H1 (cell line): ENCODE measurements at regions of chr17 and their contacts with region 1.

Region 1: DNA sequence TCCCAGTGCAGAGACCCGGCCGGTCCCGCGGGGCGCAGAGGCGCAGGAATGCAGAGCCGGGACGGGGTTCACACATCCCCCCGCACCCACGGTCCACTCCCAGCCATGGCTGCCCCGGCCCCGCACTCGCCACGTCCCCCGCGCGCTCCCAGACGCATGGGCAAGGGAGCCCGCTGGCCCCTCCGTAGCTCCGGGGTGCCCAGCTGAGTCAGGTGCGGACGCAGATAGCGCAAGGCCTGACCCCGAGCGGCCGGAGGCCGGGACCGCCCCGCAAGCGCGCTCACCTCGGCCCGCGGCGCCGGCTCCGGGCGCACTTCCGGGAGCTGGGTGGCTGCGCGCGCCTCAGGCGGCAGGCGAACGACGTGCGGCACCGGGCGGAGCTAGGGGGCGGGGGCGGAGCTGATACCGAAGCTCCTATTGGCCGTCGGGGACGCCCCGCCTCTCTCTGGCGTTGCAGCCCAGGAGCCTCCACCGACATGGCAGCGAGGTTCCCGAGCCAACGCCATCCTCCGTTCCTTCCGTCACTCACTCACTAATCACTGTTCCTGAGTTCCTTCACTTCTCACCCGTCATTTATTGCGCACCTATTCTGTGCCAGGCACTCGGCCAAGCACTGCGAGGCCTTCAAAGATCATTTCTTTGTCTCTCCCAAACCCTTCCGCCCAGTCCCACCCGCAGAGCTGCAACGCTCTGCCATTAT is at the start of gene ZNF18:
- DNase-seq: peak; percentile 82 to 95
- H3K4me3 ChIP-seq: peak within 1 kb of the TSS; percentile 75 to 90 (median 80)
- H3K27ac ChIP-seq: peak within 1 kb of the TSS; percentile 90
- H3K4me1 ChIP-seq: 0 out of 7 replicates have a peak, but pooled peaks cover 0 to 4% (median under 1%) of the 10 kb centered on the region in 4 experiments
- H3K27me3 ChIP-seq: no peaks in the 10 kb centered on the region
- CTCF ChIP-seq: no peak
- EP300 ChIP-seq: 0 out of 3 replicates have a peak, but pooled peaks of 1 of the 2 experiments have one; percentile 28
- POLR2A ChIP-seq: peak; percentile 98 to 99
- RAD21 ChIP-seq: no peak
- total RNA-seq, gene ZNF18: 9.3 and 9.9 TPM in 2 replicates

Region 2: DNA sequence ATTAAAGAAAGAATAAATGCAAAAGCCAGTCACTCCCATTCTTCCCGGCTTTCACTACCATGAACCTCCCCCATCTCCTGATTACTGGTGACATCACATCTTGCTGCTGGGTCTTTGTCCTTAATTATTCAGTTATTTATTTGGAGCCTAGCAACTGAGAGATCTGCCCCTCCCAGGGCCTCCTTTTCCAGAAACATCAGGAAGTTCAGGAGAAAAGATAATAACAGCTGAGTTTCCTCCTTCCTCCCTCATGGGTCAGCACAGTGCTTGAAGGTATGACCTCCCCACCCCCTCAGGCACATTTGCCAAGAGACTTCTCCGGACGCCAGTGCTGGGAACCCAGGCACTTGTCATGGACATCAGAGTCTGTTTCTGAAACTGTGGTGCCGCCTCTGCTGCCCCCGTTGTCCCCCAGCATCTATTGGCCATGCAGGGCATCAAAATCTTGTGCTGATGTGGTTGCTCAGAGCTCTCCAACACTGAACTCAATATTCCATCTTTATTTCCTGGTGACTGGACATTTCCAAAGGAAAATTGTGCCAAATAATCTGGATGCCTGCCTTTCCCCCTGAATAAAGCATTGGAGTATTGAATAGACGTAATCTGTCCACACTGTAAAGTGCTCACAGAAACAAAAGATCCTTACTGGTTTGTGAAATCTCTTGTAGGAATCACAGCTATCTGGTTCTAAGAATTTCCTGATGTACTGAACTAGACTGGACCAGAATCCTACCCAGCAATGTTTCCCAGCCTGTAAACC is 71.9 kb before region 1 on chr17:
- CTCF ChIA-PET with region 1: no interaction called
- POLR2A ChIA-PET with region 1: no interaction called
- DNase-seq: no peak
- H3K4me3 ChIP-seq: no peak overlapping the region
- H3K27ac ChIP-seq: no peak overlapping the region
- H3K4me1 ChIP-seq: peaks cover 0 to 4% (median 2%) of the 10 kb centered on the region in 4 experiments; a peak in 3 of 7 replicates
- H3K27me3 ChIP-seq: no peaks in the 10 kb centered on the region
- CTCF ChIP-seq: no peak
- EP300 ChIP-seq: no peak
- POLR2A ChIP-seq: no peak
- RAD21 ChIP-seq: no peak

Region 3: DNA sequence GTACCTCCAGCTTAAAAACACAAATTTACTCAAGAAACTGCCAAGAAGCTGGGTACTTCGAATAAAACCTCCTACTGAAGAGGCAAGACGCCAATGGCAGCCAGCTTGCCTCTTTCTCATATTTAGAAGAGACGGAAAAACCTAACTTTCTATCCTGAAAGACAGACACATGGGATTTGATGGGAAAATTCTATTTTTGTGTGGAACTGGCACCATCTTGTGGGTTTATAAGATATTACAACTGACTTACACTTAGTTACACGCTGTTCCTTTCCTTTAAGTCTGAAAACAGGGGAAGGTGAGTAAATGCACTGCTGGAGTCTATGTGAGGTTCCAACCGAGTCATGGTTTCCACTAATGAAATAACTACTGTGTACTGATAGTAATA is 10.4 kb before region 1 on chr17:
- CTCF ChIA-PET with region 1: interaction called, 14 read pairs
- POLR2A ChIA-PET with region 1: interaction called, 27 read pairs
- DNase-seq: no peak
- H3K4me3 ChIP-seq: no peak overlapping the region
- H3K27ac ChIP-seq: no peak overlapping the region
- H3K4me1 ChIP-seq: peaks cover 0 to 13% (median 7%) of the 10 kb centered on the region in 4 experiments
- H3K27me3 ChIP-seq: no peaks in the 10 kb centered on the region
- CTCF ChIP-seq: peak in 2 of 3 experiments; percentile 32 to 43; a peak in 2 of 4 replicates
- EP300 ChIP-seq: no peak
- POLR2A ChIP-seq: no peak
- RAD21 ChIP-seq: peak; percentile 63 to 67

Region 4: GRCh38 chr17:12007466-12007865 is 10.2 kb after region 1 on chr17:
- CTCF ChIA-PET with region 1: interaction called, 3 read pairs
- POLR2A ChIA-PET with region 1: interaction called, 25 read pairs
- DNase-seq: no peak
- H3K4me3 ChIP-seq: no peak overlapping the region
- H3K27ac ChIP-seq: no peak overlapping the region
- H3K4me1 ChIP-seq: no peaks in the 10 kb centered on the region
- H3K27me3 ChIP-seq: no peaks in the 10 kb centered on the region
- CTCF ChIP-seq: no peak
- EP300 ChIP-seq: no peak
- POLR2A ChIP-seq: no peak
- RAD21 ChIP-seq: no peak

Region 5: GRCh38 chr17:12020642-12021622 is 23.6 kb after region 1 on chr17 and contains the start of gene MAP2K4:
- CTCF ChIA-PET with region 1: interaction called, 4 read pairs
- POLR2A ChIA-PET with region 1: interaction called, 49 read pairs
- DNase-seq: peak; percentile 83 to 99
- H3K4me3 ChIP-seq: peak within 1 kb of the TSS; percentile 68 to 85 (median 77)
- H3K27ac ChIP-seq: peak within 1 kb of the TSS; percentile 76
- H3K4me1 ChIP-seq: peaks cover 0 to 3% (median 0%) of the 10 kb centered on the region in 4 experiments; a peak in 3 of 7 replicates
- H3K27me3 ChIP-seq: no peaks in the 10 kb centered on the region; a peak in 1 of 7 replicates
- CTCF ChIP-seq: no peak
- EP300 ChIP-seq: peak in 1 of 2 experiments; percentile 19; a peak in 1 of 3 replicates
- POLR2A ChIP-seq: peak; percentile 96 to 97
- RAD21 ChIP-seq: no peak
- total RNA-seq, gene MAP2K4: 37.3 and 39.1 TPM in 2 replicates

Region 6: GRCh38 chr17:12055889-12056288 is 58.6 kb after region 1 on chr17:
- CTCF ChIA-PET with region 1: no interaction called
- POLR2A ChIA-PET with region 1: no interaction called
- DNase-seq: no peak
- H3K4me3 ChIP-seq: no peak overlapping the region
- H3K27ac ChIP-seq: no peak overlapping the region
- H3K4me1 ChIP-seq: peaks cover 2 to 4% (median 3%) of the 10 kb centered on the region in 4 experiments; a peak in 5 of 7 replicates
- H3K27me3 ChIP-seq: no peaks in the 10 kb centered on the region
- CTCF ChIP-seq: no peak
- EP300 ChIP-seq: no peak
- POLR2A ChIP-seq: no peak
- RAD21 ChIP-seq: no peak

Region 7: DNA sequence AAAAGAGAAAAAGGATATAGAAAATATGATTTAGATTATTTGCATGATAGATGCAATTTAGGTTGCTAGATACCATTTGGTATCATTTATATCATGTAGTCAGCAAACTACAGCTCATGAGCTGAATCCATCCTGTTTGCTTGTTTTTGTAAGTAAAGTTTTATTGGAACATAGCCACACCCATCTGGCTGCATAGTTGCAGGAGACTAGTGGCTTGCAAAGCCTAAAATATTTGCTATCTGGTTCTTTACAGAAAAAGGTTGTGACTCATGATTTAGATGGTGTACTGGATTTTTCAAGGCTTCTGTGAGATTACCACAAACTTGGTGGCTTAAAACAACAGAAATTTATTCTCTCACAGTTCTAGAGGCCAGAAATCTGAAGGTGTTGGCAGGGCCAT is 73.3 kb after region 1 on chr17:
- CTCF ChIA-PET with region 1: no interaction called
- POLR2A ChIA-PET with region 1: no interaction called
- DNase-seq: no peak
- H3K4me3 ChIP-seq: no peak overlapping the region
- H3K27ac ChIP-seq: no peak overlapping the region
- H3K4me1 ChIP-seq: no peaks in the 10 kb centered on the region
- H3K27me3 ChIP-seq: no peaks in the 10 kb centered on the region
- CTCF ChIP-seq: no peak
- EP300 ChIP-seq: no peak
- POLR2A ChIP-seq: no peak
- RAD21 ChIP-seq: no peak

Region 8: DNA sequence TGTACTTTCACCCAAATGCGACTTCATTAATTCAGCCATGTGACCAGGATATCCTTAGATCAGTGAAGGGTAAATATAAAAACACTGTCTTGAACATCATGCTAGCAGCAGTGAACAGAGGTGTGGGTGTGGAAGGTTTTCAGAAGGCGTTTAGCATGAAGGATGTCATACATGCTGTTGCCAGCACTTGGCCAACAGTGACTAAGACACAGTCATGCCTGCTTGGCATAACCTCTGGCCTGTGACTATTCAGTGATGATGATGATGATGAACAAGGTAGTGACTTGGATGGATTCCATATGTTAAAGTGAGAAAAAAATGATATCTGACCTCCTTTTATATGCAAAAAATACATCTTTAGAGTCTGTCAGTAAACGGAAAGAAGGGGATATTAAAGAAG is 121.3 kb after region 1 on chr17:
- CTCF ChIA-PET with region 1: no interaction called
- POLR2A ChIA-PET with region 1: no interaction called
- DNase-seq: no peak
- H3K4me3 ChIP-seq: no peak overlapping the region
- H3K27ac ChIP-seq: no peak overlapping the region
- H3K4me1 ChIP-seq: peaks cover 0 to 8% (median 4%) of the 10 kb centered on the region in 4 experiments; a peak in 4 of 7 replicates
- H3K27me3 ChIP-seq: no peaks in the 10 kb centered on the region
- CTCF ChIP-seq: no peak
- EP300 ChIP-seq: no peak
- POLR2A ChIP-seq: no peak
- RAD21 ChIP-seq: no peak